ENCODE measurements at regions of chr6 and their contacts with region 1.

Region 1: DNA sequence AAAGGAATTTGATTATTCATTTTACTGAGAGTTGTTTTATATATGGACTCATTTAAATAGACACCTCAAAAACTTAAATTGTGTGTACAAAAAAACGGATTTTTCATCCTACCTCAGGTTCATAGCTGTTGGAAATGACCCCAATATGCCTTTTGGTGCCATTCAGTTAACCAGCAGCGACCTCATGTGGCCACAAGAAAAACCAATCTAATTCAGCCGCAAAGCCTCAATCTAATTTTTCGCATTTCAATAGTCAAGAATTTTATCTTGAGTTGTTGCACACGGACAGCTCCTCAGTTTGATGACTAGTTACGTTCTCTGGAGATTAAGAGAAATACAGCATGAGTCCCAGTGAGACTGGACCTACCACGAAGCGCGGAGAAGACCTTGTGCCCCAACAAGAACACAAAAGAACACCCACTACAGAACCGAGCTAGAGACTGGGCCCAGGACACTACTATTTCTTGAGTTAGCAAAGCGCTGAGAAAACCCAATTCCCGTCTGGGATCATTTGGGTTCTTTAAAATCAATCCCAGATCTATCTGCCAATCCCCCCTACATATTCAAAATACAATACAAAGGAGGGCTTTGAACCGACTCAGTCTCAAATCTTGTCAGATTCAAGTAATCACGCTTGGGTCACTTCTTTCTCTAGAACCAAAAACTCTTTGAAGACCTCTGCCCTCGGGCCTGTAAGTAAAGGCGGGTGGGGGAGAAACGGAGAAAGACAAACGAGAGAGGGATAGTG is 1.1 kb downstream of the TCP11 start:
- DNase-seq: peak; percentile 69
- H3K4me3 Mint-ChIP-seq: no peak overlapping the region
- H3K27ac Mint-ChIP-seq: no peak overlapping the region
- H3K4me1 Mint-ChIP-seq: peaks cover 22% of the 10 kb centered on the region
- H3K27me3 Mint-ChIP-seq: peaks cover 27% of the 10 kb centered on the region

Region 2: GRCh38 chr6:35089935-35090505 is 50.1 kb before region 1 on chr6:
- CTCF ChIA-PET with region 1: no interaction called
- DNase-seq: no peak
- H3K4me3 Mint-ChIP-seq: no peak overlapping the region
- H3K27ac Mint-ChIP-seq: no peak overlapping the region
- H3K4me1 Mint-ChIP-seq: no peaks in the 10 kb centered on the region
- H3K27me3 Mint-ChIP-seq: peaks cover 4% of the 10 kb centered on the region

Region 3: GRCh38 chr6:35128496-35128895 is 11.6 kb before region 1 on chr6:
- CTCF ChIA-PET with region 1: interaction called, 10 read pairs
- DNase-seq: no peak
- H3K4me3 Mint-ChIP-seq: no peak overlapping the region
- H3K27ac Mint-ChIP-seq: no peak overlapping the region
- H3K4me1 Mint-ChIP-seq: no peaks in the 10 kb centered on the region
- H3K27me3 Mint-ChIP-seq: peaks cover 27% of the 10 kb centered on the region

Region 4: GRCh38 chr6:35203680-35204079 is 63.6 kb after region 1 on chr6:
- CTCF ChIA-PET with region 1: interaction called, 125 read pairs
- DNase-seq: no peak
- H3K4me3 Mint-ChIP-seq: no peak overlapping the region
- H3K27ac Mint-ChIP-seq: no peak overlapping the region
- H3K4me1 Mint-ChIP-seq: no peaks in the 10 kb centered on the region
- H3K27me3 Mint-ChIP-seq: peaks cover 78% of the 10 kb centered on the region

Measured in activated naive CD4-positive, alpha-beta T cell treated with anti-CD3 and anti-CD28 coated beads, Interleukin-2, amount 10 ng/mL, durations not matched to agents 7 days and 5 days (primary cell).